B cell (primary cell): ENCODE measurements at regions of chr17 and their contacts with region 1.

Region 1: DNA sequence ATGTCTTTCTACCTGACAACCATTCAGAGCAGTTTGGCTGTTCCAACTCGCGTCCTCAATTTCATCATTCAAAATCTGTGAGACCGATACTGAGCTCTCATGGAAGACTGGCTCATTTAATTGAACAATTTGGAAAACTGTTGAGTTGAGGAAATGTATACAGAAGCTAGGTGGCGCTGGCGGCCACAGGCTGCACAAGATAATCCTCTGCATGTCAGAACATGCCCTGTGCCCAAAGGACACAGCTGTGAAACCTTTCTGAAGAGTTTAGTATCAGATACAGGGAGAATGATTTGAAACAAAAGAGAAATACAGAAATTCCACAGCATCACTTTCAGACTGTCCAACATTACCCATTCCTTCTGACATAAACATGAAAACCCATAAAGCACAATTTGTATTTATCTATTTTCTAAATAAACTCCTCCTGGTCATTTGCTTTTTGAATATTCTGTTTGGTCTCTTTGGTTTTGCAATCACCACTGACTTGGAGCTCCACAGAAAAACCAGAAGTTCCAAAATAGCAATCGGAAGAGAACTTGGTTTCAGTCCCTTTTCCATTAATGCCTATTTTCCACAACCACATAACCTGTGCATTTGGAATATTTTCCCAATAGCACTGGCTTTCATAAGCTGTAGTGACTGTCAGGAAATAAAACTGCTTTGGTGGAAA is 192.8 kb downstream of the MAP2K6 start:
- DNase-seq: peak; percentile 30
- ATAC-seq: peak; percentile 45
- H3K4me3 ChIP-seq: no peak overlapping the region
- H3K4me3 Mint-ChIP-seq: no peak overlapping the region
- H3K27ac ChIP-seq: no peak overlapping the region
- H3K27ac Mint-ChIP-seq: no peak overlapping the region
- H3K4me1 ChIP-seq: no peaks in the 10 kb centered on the region
- H3K4me1 Mint-ChIP-seq: peaks cover 5% of the 10 kb centered on the region
- H3K27me3 ChIP-seq: peaks cover 0 to 4% (median 0%) of the 10 kb centered on the region in 4 experiments
- H3K27me3 Mint-ChIP-seq: no peaks in the 10 kb centered on the region
- CTCF ChIP-seq: peak; percentile 66

Region 2: DNA sequence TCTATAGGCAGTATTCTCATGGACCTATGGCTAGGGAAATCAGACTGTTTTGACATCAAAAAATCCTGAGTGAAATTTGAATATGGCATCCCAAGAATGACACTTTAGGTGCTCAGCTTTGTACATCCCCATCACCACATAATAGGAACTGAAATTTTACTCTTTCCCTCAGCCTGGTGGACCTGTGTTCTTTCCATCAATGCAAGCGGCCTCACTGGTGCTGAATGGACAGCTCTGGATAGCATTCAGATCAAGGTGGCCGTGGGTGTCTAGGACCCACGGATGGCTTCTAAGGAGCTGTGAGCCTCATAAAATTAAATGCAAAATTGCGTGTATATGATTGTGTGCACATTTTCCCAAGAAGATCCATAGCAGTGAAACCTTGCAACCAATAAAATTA is 40.2 kb before region 1 on chr17:
- CTCF ChIA-PET with region 1: interaction called, 22 read pairs
- POLR2A ChIA-PET with region 1: no interaction called
- intact Hi-C with region 1: loop called (anchors 5 kb)
- DNase-seq: no peak
- ATAC-seq: no peak
- H3K4me3 ChIP-seq: no peak overlapping the region
- H3K4me3 Mint-ChIP-seq: no peak overlapping the region
- H3K27ac ChIP-seq: no peak overlapping the region
- H3K27ac Mint-ChIP-seq: no peak overlapping the region
- H3K4me1 ChIP-seq: peaks cover 0 to 6% of the 10 kb centered on the region in 2 donors
- H3K4me1 Mint-ChIP-seq: peaks cover 2% of the 10 kb centered on the region
- H3K27me3 ChIP-seq: no peaks in the 10 kb centered on the region
- H3K27me3 Mint-ChIP-seq: peaks cover 15% of the 10 kb centered on the region
- CTCF ChIP-seq: no peak

Region 3: DNA sequence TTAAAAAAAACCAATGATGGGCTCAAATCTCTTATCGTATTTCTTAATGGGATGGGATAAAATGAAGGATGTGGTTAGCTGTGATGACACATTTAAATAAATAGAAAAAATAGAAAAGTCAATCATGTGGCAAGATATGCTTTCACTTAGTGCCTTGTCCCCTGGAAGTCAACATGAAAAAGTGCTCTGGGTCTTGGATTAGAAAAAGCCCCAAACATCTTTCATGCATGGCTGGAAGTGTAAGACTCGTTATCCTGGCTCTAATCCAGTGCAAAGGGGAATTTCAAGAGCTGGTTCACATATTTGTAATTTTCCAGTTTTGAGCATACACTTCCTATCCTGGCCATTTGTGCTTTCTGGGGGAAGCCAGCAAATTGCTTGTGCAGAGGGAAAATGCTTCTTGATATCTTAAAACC is 31.9 kb before region 1 on chr17:
- CTCF ChIA-PET with region 1: interaction called, 22 read pairs
- POLR2A ChIA-PET with region 1: no interaction called
- intact Hi-C with region 1: no loop called
- DNase-seq: no peak
- ATAC-seq: no peak
- H3K4me3 ChIP-seq: no peak overlapping the region
- H3K4me3 Mint-ChIP-seq: peak overlapping the region; percentile 2
- H3K27ac ChIP-seq: no peak overlapping the region
- H3K27ac Mint-ChIP-seq: no peak overlapping the region
- H3K4me1 ChIP-seq: peaks cover 6 to 10% of the 10 kb centered on the region in 2 donors
- H3K4me1 Mint-ChIP-seq: peaks cover 35% of the 10 kb centered on the region
- H3K27me3 ChIP-seq: no peaks in the 10 kb centered on the region
- H3K27me3 Mint-ChIP-seq: peaks cover 6% of the 10 kb centered on the region
- CTCF ChIP-seq: no peak

Region 4: GRCh38 chr17:69581061-69581961 is 26.0 kb before region 1 on chr17:
- CTCF ChIA-PET with region 1: interaction called, 18 read pairs
- POLR2A ChIA-PET with region 1: interaction called, 4 read pairs
- intact Hi-C with region 1: no loop called
- DNase-seq: peak; percentile 88
- ATAC-seq: peak; percentile 89
- H3K4me3 ChIP-seq: peak overlapping the region; percentile 32 to 70 (median 51)
- H3K4me3 Mint-ChIP-seq: peak overlapping the region; percentile 82
- H3K27ac ChIP-seq: peak overlapping the region; percentile 49 to 69
- H3K27ac Mint-ChIP-seq: peak overlapping the region; percentile 93
- H3K4me1 ChIP-seq: peaks cover 18% of the 10 kb centered on the region in 2 donors
- H3K4me1 Mint-ChIP-seq: peaks cover 41% of the 10 kb centered on the region
- H3K27me3 ChIP-seq: no peaks in the 10 kb centered on the region
- H3K27me3 Mint-ChIP-seq: peaks cover 6% of the 10 kb centered on the region
- CTCF ChIP-seq: no peak

Region 5: DNA sequence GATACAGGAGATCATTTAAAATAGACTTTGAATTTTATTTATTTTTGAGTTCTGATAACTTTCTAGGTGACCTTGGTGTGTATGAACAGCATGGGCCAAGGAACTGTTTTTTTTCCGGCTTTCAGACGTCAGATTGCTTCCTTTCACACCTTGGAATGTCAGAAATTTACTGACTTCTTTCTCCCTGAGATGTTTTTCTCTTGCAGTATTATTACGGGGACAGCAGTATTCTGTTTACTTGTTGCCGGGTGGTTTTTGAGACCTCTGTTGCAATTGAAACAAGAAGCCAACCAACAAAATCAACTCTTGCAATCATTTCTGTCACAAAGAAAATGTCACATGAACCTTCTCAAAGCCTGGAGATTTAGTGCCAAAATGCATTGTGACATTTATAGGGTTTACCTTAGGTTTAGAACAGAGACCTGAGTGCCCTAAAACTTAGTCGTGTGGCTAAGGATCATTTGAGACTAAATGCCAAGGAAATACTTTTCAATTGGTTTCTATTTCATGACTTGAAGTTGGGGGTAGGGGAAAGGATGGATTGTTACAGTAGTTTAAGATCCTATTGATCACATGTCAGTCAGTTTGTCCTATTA is 18.5 kb before region 1 on chr17:
- CTCF ChIA-PET with region 1: interaction called, 11 read pairs
- POLR2A ChIA-PET with region 1: no interaction called
- intact Hi-C with region 1: no loop called
- DNase-seq: no peak
- ATAC-seq: no peak
- H3K4me3 ChIP-seq: no peak overlapping the region
- H3K4me3 Mint-ChIP-seq: no peak overlapping the region
- H3K27ac ChIP-seq: no peak overlapping the region
- H3K27ac Mint-ChIP-seq: no peak overlapping the region
- H3K4me1 ChIP-seq: no peaks in the 10 kb centered on the region
- H3K4me1 Mint-ChIP-seq: no peaks in the 10 kb centered on the region
- H3K27me3 ChIP-seq: no peaks in the 10 kb centered on the region
- H3K27me3 Mint-ChIP-seq: no peaks in the 10 kb centered on the region
- CTCF ChIP-seq: no peak

Region 6: DNA sequence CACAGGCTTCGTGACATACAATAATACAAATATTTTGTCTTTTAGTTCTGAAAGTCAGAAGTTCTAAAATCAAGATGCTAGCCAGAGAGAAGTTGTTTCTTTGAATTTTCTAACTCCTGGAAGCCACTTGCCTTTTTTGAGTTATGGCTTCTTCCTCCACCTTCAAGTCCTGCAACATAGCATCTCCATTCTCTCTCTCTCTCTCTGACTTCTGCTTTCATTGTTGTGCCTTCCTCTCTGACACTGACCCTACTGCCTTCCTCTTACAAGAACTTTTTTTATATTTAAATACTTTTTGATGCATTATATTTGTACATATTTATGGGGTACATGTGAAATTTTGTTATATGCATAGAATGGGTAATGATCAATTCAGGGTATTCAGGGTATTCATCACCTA is 13.1 kb after region 1 on chr17:
- CTCF ChIA-PET with region 1: interaction called, 10 read pairs
- POLR2A ChIA-PET with region 1: no interaction called
- intact Hi-C with region 1: no loop called
- DNase-seq: no peak
- ATAC-seq: no peak
- H3K4me3 ChIP-seq: no peak overlapping the region
- H3K4me3 Mint-ChIP-seq: no peak overlapping the region
- H3K27ac ChIP-seq: no peak overlapping the region
- H3K27ac Mint-ChIP-seq: no peak overlapping the region
- H3K4me1 ChIP-seq: no peaks in the 10 kb centered on the region
- H3K4me1 Mint-ChIP-seq: no peaks in the 10 kb centered on the region
- H3K27me3 ChIP-seq: no peaks in the 10 kb centered on the region
- H3K27me3 Mint-ChIP-seq: peaks cover 7% of the 10 kb centered on the region
- CTCF ChIP-seq: no peak

Region 7: DNA sequence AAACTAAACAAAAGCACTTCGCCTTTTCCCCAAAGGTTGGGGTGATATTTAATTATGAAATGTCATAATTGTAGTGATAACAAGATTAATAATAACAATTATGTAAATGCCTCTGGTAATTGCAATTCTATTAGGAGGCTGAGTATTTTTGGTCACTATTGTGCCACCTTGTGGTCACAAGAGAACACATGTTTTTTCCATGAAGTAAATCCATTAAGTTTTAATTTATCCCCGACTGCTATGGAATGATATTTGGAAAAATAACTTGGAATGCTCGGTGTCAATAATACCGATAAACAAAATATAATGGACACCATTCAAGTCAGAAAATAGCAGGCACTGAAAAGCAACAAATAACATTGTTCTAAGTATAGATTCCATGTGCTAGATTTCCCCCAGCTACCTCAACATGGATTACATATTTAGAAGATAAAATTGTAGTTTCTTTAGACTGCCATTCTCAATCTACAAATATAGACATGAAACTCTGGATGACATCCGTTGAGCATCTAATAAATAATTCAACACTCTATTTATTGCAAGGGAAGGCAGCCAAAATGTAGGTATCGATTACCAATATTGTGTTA is 537.1 kb after region 1 on chr17:
- CTCF ChIA-PET with region 1: interaction called, 16 read pairs
- POLR2A ChIA-PET with region 1: no interaction called
- intact Hi-C with region 1: no loop called
- DNase-seq: peak; percentile 38
- ATAC-seq: no peak
- H3K4me3 ChIP-seq: no peak overlapping the region
- H3K4me3 Mint-ChIP-seq: no peak overlapping the region
- H3K27ac ChIP-seq: no peak overlapping the region
- H3K27ac Mint-ChIP-seq: no peak overlapping the region
- H3K4me1 ChIP-seq: no peaks in the 10 kb centered on the region
- H3K4me1 Mint-ChIP-seq: no peaks in the 10 kb centered on the region
- H3K27me3 ChIP-seq: no peaks in the 10 kb centered on the region
- H3K27me3 Mint-ChIP-seq: peaks cover 6% of the 10 kb centered on the region
- CTCF ChIP-seq: peak; percentile 75